Mammary epithelial cell (primary cell): ENCODE measurements at regions of chr1 and their contacts with region 1.

Region 1: DNA sequence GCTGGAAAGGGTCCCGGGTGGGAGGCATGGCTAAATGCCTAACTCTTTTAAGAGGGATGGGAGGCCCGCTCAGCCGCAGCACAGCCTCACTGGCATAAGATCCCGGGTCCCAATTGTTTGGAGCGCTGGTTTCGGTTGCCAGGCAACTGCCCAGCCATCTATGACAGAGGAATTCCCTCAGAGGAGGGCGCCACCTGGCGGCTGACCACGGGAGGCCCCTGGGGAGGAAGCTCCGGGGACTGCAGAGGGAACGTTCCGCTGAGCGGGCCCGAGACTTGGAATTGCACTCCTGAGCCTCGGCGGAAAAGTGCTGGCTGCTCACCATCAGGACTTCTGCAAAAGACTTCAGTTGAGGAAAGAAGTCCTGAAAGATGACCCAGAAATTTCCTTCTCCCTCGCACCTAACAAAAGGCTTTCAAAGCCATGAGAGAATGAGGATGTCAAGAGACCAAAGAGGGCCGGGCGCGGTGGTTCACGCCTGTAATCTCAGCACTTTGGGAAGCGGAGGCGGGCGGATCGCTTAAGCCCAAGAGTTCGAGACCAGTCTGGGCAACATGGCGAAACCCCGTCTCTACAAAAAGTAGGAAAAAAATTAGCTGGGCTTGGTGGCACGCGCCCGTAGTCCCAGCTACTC is 1.1 kb upstream of the ELAPOR1 start:
- DNase-seq: peak; percentile 77
- H3K4me3 ChIP-seq: peak overlapping the region in 1 of 3 experiments; percentile 14
- H3K27ac ChIP-seq: peak overlapping the region; percentile 31
- H3K4me1 ChIP-seq: peaks cover 12% of the 10 kb centered on the region
- H3K27me3 ChIP-seq: peaks cover 2% of the 10 kb centered on the region
- CTCF ChIP-seq: peak; percentile 95 to 99

Region 2: GRCh38 chr1:108828022-108828961 is 284.5 kb before region 1 on chr1:
- CTCF ChIA-PET with region 1: no interaction called
- dilution Hi-C with region 1: no loop called
- in situ Hi-C with region 1: no loop called
- intact Hi-C with region 1: loop called (anchors 2 kb)
- DNase-seq: peak; percentile 96
- H3K4me3 ChIP-seq: peak overlapping the region in 1 of 3 experiments; percentile 1
- H3K27ac ChIP-seq: peak overlapping the region; percentile 90
- H3K4me1 ChIP-seq: peaks cover 34% of the 10 kb centered on the region
- H3K27me3 ChIP-seq: no peaks in the 10 kb centered on the region
- CTCF ChIP-seq: peak; percentile 62 to 80

Region 3: DNA sequence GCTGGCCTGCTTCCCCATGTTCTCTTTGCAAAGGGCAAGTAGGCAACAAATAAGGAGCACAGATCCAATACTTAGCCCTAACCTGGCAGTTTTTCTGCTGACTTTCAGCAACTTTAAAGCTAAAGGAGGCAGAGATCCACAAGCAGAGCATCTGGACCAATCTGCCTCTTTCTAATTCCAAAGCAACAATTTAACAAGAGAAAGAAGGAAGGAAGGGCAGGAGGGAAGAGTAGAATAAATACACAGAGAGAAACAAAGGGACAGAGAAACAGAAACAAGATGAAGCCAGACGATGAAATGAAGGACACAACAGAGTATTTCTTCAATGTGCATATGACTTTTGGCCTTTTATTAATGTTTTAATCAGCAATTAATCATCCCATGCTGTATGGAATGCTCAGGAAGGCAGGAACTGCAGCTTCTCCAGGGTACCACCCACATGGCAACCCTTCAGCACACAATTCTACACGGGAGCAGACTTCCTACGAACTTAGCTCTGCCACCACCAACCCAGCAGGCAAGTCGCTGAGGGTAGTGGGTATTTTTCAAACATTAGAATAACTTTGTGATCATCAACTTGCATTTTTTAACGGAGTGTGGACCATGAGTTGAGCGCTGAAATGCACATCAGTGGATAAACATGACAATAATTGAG is 164.8 kb before region 1 on chr1:
- CTCF ChIA-PET with region 1: interaction called, 11 read pairs
- dilution Hi-C with region 1: no loop called
- in situ Hi-C with region 1: no loop called
- intact Hi-C with region 1: loop called (anchors 5 kb)
- DNase-seq: peak; percentile 8
- H3K4me3 ChIP-seq: peak overlapping the region in 1 of 3 experiments; percentile 4
- H3K27ac ChIP-seq: no peak overlapping the region
- H3K4me1 ChIP-seq: peaks cover 5% of the 10 kb centered on the region
- H3K27me3 ChIP-seq: no peaks in the 10 kb centered on the region
- CTCF ChIP-seq: no peak

Region 4: GRCh38 chr1:108972951-108973350 is 139.8 kb before region 1 on chr1:
- CTCF ChIA-PET with region 1: no interaction called
- dilution Hi-C with region 1: no loop called
- in situ Hi-C with region 1: no loop called
- intact Hi-C with region 1: no loop called
- DNase-seq: no peak
- H3K4me3 ChIP-seq: no peak overlapping the region
- H3K27ac ChIP-seq: no peak overlapping the region
- H3K4me1 ChIP-seq: no peaks in the 10 kb centered on the region
- H3K27me3 ChIP-seq: no peaks in the 10 kb centered on the region
- CTCF ChIP-seq: no peak

Region 5: DNA sequence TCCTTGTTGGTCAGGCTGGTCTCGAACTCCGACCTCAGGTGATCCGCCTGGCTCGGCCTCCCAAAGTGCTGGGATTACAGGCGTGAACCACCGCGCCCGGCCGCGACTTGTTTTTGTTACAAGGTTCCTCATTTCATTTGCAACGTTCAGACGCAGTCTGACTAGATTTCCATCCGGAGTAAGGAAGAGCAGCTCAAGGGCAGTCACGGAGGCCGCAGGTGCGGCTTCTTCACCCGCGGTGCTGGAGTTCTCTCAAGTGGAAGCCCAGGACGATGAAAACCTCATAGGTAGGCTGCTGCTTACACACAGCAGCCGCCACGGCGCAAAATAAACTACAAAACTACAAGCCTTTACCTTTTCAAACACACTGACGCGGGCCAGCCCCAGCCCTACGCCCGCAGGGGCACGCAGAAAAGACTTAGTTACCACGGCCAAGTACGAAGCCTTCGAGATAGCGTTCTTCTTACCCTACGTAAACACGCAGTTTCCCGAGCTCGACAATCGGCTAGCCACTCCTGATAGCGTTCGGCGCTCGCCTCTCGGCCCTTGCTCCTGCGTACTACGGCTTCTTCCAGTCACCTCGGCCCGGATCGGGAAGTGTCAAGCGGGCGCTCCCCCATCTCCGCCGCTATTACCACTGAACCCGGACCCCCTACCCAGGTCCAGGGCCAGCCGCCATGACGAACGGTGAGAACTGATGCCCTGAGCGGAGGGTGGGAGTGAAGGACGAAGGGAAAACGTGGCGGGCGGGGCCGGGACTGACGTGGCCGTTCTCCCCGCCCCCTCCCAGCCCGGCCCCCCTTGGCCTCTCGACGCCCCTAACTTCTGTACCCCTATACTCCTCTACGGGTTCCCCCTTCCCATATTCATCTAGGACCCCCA is 22.3 kb before region 1 on chr1 and contains the start of gene TMEM167B:
- CTCF ChIA-PET with region 1: interaction called, 6 read pairs
- dilution Hi-C with region 1: no loop called
- in situ Hi-C with region 1: no loop called
- intact Hi-C with region 1: loop called (anchors 1 kb)
- DNase-seq: peak; percentile 91
- H3K4me3 ChIP-seq: peak within 1 kb of the TSS; percentile 65 to 81 (median 77)
- H3K27ac ChIP-seq: peak within 1 kb of the TSS; percentile 77
- H3K4me1 ChIP-seq: peaks cover 9% of the 10 kb centered on the region
- H3K27me3 ChIP-seq: no peaks in the 10 kb centered on the region
- CTCF ChIP-seq: no peak
- total RNA-seq, gene TMEM167B: 24.8 to 27.4 TPM

Region 6: GRCh38 chr1:109161858-109162606 is 49.3 kb after region 1 on chr1:
- CTCF ChIA-PET with region 1: no interaction called
- dilution Hi-C with region 1: no loop called
- in situ Hi-C with region 1: no loop called
- intact Hi-C with region 1: no loop called
- DNase-seq: peak; percentile 84
- H3K4me3 ChIP-seq: peak overlapping the region in 1 of 3 experiments; percentile 24
- H3K27ac ChIP-seq: no peak overlapping the region
- H3K4me1 ChIP-seq: peaks cover 17% of the 10 kb centered on the region
- H3K27me3 ChIP-seq: no peaks in the 10 kb centered on the region
- CTCF ChIP-seq: no peak

Region 7: GRCh38 chr1:109184687-109185086 is 71.9 kb after region 1 on chr1:
- CTCF ChIA-PET with region 1: no interaction called
- dilution Hi-C with region 1: no loop called
- in situ Hi-C with region 1: no loop called
- intact Hi-C with region 1: no loop called
- DNase-seq: no peak
- H3K4me3 ChIP-seq: no peak overlapping the region
- H3K27ac ChIP-seq: no peak overlapping the region
- H3K4me1 ChIP-seq: peaks cover 5% of the 10 kb centered on the region
- H3K27me3 ChIP-seq: no peaks in the 10 kb centered on the region
- CTCF ChIP-seq: no peak

Region 8: GRCh38 chr1:109229531-109230127 is 116.9 kb after region 1 on chr1:
- CTCF ChIA-PET with region 1: interaction called, 3 read pairs
- dilution Hi-C with region 1: loop called (anchors 5 kb)
- in situ Hi-C with region 1: no loop called
- intact Hi-C with region 1: no loop called
- DNase-seq: no peak
- H3K4me3 ChIP-seq: no peak overlapping the region
- H3K27ac ChIP-seq: no peak overlapping the region
- H3K4me1 ChIP-seq: peaks cover 14% of the 10 kb centered on the region
- H3K27me3 ChIP-seq: no peaks in the 10 kb centered on the region
- CTCF ChIP-seq: no peak

Region 9: GRCh38 chr1:109532365-109533136 is 419.8 kb after region 1 on chr1:
- CTCF ChIA-PET with region 1: no interaction called
- dilution Hi-C with region 1: no loop called
- in situ Hi-C with region 1: no loop called
- intact Hi-C with region 1: loop called (anchors 1 kb)
- DNase-seq: peak; percentile 37
- H3K4me3 ChIP-seq: peak overlapping the region in 1 of 3 experiments; percentile 28
- H3K27ac ChIP-seq: no peak overlapping the region
- H3K4me1 ChIP-seq: peaks cover 12% of the 10 kb centered on the region
- H3K27me3 ChIP-seq: no peaks in the 10 kb centered on the region
- CTCF ChIP-seq: peak; percentile 92 to 99